Posterior vena cava (tissue), 2 donors: ENCODE measurements at regions of chr5 and their contacts with region 1.

Region 1: DNA sequence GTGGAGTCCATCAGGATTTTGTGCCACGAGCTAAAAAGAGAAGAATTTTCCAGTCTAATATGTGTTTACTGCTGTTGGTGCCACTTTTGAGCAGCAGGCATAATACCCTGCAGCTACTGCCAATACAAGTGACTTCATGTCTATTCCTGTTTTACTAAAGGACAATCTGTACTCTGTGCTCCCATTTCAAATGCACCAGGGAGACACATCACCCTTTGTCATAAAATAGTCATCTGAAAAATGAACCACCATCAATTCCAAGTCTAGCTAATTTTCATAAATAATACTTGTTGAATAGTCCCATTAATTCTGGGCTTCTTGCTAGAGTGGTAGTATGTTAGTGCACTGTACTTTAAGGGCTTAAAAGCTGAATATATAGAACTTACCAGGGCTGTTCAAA is 8.9 kb upstream of the PKD2L2 start:
- DNase-seq: no peak

Region 2: DNA sequence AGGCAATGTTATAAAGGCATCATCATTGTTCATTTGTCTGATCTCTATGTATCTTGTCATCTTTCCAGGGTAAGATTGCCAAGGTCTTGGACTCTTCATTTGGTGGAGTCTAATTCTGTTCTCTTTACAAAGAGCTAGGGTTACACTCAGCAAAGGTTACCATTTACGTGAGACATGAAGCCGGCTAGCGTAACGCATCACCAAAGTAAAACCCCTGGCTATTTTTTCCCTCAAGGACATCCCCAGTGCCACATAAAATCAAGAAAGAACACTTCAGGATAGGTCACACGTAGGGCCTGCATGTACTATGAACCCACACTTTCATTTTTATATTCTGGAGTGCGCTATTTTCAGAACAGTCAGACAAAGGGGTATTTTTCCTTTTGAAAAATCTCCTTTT is 32.6 kb before region 1 on chr5:
- intact Hi-C with region 1: loop called in 1 of 2 experiments (anchors 1 kb)
- DNase-seq: no peak